CD8-positive, alpha-beta T cell (primary cell): ENCODE measurements at regions of chr1 and their contacts with region 1.

Region 1: GRCh38 chr1:85172684-85173337 is 28.0 kb downstream of the SYDE2 start:
- DNase-seq: no peak
- ATAC-seq: no peak
- H3K4me3 ChIP-seq: no peak overlapping the region
- H3K4me3 Mint-ChIP-seq: no peak overlapping the region
- H3K27ac ChIP-seq: no peak overlapping the region
- H3K27ac Mint-ChIP-seq: no peak overlapping the region
- H3K4me1 ChIP-seq: peaks cover 12% of the 10 kb centered on the region
- H3K4me1 Mint-ChIP-seq: peaks cover 16% of the 10 kb centered on the region
- H3K27me3 ChIP-seq: no peaks in the 10 kb centered on the region
- H3K27me3 Mint-ChIP-seq: no peaks in the 10 kb centered on the region
- CTCF ChIP-seq: no peak

Region 2: GRCh38 chr1:85208488-85208887 is 35.7 kb after region 1 on chr1:
- CTCF ChIA-PET with region 1: no interaction called
- POLR2A ChIA-PET with region 1: no interaction called
- intact Hi-C with region 1: loop called in 1 of 2 experiments (anchors 5 kb)
- DNase-seq: no peak
- ATAC-seq: no peak
- H3K4me3 ChIP-seq: no peak overlapping the region
- H3K4me3 Mint-ChIP-seq: no peak overlapping the region
- H3K27ac ChIP-seq: no peak overlapping the region
- H3K27ac Mint-ChIP-seq: no peak overlapping the region
- H3K4me1 ChIP-seq: no peaks in the 10 kb centered on the region
- H3K4me1 Mint-ChIP-seq: no peaks in the 10 kb centered on the region
- H3K27me3 ChIP-seq: peaks cover 0 to 3% of the 10 kb centered on the region in 2 experiments
- H3K27me3 Mint-ChIP-seq: peaks cover 30% of the 10 kb centered on the region
- CTCF ChIP-seq: no peak

Region 3: GRCh38 chr1:85398391-85399064 is 225.7 kb after region 1 on chr1:
- CTCF ChIA-PET with region 1: no interaction called
- POLR2A ChIA-PET with region 1: no interaction called
- intact Hi-C with region 1: no loop called
- DNase-seq: no peak
- ATAC-seq: no peak
- H3K4me3 ChIP-seq: no peak overlapping the region
- H3K4me3 Mint-ChIP-seq: no peak overlapping the region
- H3K27ac ChIP-seq: no peak overlapping the region
- H3K27ac Mint-ChIP-seq: no peak overlapping the region
- H3K4me1 ChIP-seq: no peaks in the 10 kb centered on the region
- H3K4me1 Mint-ChIP-seq: no peaks in the 10 kb centered on the region
- H3K27me3 ChIP-seq: no peaks in the 10 kb centered on the region
- H3K27me3 Mint-ChIP-seq: no peaks in the 10 kb centered on the region
- CTCF ChIP-seq: no peak